ENCODE measurements at regions of chr3 and their contacts with region 1.

Region 1: GRCh38 chr3:13657660-13658435 is 108.9 kb downstream of the FBLN2 start:
- DNase-seq: peak; percentile 81
- H3K4me3 ChIP-seq: no peak overlapping the region
- H3K27ac ChIP-seq: no peak overlapping the region
- H3K4me1 ChIP-seq: peaks cover 0 to 47% (median 32%) of the 10 kb centered on the region in 6 donors
- H3K27me3 ChIP-seq: peaks cover 0 to 51% (median 17%) of the 10 kb centered on the region in 7 donors
- CTCF ChIP-seq: peak; percentile 26 to 84 (median 80)
- POLR2A ChIP-seq: no peak

Region 2: DNA sequence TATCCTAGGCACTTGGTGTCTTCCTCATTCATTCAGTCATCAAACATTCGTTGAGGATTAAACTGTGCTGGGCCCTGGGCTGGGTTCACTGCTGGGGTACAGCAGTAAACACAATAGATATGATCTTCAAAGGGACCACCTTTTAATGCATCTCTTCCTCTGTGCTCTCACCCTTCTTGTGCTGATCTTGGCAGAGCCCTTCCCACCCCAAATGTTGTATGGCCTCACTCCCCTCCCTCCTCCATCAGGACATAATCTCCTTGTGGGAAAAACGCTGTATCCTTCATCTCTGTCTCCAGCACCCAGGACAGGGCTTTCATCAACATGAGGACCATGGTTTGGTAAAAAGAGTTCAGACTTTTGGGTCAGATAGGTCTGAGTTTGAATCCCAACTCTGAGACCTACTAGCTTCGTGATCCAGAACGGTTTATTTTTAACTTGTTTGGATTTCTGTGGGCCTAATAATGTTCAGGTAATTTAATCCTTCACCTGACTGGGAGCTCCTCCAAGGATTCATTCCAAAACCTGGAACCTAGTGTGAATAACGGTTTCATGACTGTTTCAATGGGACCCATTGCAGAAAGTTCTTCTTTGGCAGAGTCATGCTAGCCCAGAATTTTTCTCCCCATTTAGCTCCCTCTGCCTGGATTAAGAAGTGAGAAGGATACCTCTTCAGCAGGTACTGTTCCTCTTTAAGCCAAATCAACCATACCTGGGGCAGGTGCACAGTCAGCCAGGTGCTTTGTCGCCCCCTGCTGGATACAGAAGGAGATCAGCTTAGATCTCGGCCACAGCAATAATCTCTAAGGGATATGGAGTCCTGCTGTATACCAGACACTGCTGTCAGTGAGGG is 227.2 kb after region 1 on chr3:
- intact Hi-C with region 1: loop called (anchors 5 kb)
- DNase-seq: no peak
- H3K4me3 ChIP-seq: no peak overlapping the region
- H3K27ac ChIP-seq: no peak overlapping the region
- H3K4me1 ChIP-seq: peaks cover 9 to 24% (median 12%) of the 10 kb centered on the region in 6 donors
- H3K27me3 ChIP-seq: peaks cover 0 to 56% (median 15%) of the 10 kb centered on the region in 7 donors
- CTCF ChIP-seq: peak; percentile 21 to 72 (median 49)
- POLR2A ChIP-seq: no peak

Measured in spleen (tissue), 13 donors.